ENCODE measurements at regions of chr17 and their contacts with region 1.

Region 1: GRCh38 chr17:62065598-62066468 is 755 bp upstream of the MED13 start:
- DNase-seq: peak; percentile 99
- ATAC-seq: peak; percentile 99 to 100 (median 100)
- H3K4me3 ChIP-seq: peak overlapping the region; percentile 63 to 99 (median 94)
- H3K27ac ChIP-seq: peak overlapping the region; percentile 92 to 100 (median 99)
- H3K4me1 ChIP-seq: peaks cover 0 to 38% (median 29%) of the 10 kb centered on the region in 9 donors
- H3K27me3 ChIP-seq: no peaks in the 10 kb centered on the region
- CTCF ChIP-seq: peak; percentile 88 to 98 (median 93)

Region 2: DNA sequence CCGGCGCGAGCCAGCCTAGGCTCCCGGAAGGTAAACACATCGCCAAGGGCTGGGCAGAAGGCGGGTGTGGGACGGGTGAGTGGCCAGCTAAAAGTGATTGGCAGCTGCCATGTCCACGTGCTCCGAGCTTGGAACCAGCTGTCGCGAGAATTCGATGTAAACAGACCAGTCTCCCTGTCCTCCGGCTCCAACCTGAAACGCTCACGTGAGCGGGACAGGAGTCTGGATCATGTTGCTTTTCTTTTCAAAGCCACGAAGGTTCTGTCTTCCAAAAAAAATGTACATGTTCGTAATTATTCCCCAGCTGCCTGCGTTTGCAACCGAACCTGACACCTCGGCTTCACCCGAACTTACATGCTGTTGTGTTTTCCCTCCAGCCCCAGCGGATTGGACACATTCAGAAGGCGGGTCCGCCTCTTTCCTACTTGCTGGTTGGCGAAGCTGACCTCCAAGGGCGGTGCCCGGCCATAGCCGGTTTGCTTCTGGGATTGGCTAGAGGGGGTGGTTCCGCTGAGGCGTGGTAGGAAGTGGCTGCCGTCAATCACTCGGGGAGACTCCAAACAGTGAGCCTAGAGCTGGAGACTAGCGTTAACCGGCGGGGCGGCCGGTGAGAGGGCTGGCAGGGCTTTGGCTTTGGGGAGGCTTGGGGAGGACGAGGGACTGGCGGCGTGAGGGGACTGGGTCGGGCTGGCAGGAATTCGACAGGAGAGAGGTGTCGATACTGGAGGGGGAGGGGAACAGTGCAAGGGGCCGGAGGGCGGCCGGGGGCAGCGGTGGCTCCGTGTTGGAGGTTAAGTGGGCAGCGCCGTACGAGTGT is 1388.3 kb before region 1 on chr17 and contains the start of gene BCAS3:
- intact Hi-C with region 1: loop called in 1 of 10 experiments (anchors 10 kb)
- DNase-seq: peak; percentile 96 to 99
- ATAC-seq: peak; percentile 98 to 99 (median 99)
- H3K4me3 ChIP-seq: peak within 1 kb of the TSS; percentile 73 to 95 (median 88)
- H3K27ac ChIP-seq: peak within 1 kb of the TSS; percentile 45 to 89 (median 76)
- H3K4me1 ChIP-seq: peaks cover 0 to 18% (median 13%) of the 10 kb centered on the region in 9 donors
- H3K27me3 ChIP-seq: no peaks in the 10 kb centered on the region
- CTCF ChIP-seq: no peak
- total RNA-seq, gene BCAS3: 14.1 to 21.8 (median 17.8) TPM

Region 3: DNA sequence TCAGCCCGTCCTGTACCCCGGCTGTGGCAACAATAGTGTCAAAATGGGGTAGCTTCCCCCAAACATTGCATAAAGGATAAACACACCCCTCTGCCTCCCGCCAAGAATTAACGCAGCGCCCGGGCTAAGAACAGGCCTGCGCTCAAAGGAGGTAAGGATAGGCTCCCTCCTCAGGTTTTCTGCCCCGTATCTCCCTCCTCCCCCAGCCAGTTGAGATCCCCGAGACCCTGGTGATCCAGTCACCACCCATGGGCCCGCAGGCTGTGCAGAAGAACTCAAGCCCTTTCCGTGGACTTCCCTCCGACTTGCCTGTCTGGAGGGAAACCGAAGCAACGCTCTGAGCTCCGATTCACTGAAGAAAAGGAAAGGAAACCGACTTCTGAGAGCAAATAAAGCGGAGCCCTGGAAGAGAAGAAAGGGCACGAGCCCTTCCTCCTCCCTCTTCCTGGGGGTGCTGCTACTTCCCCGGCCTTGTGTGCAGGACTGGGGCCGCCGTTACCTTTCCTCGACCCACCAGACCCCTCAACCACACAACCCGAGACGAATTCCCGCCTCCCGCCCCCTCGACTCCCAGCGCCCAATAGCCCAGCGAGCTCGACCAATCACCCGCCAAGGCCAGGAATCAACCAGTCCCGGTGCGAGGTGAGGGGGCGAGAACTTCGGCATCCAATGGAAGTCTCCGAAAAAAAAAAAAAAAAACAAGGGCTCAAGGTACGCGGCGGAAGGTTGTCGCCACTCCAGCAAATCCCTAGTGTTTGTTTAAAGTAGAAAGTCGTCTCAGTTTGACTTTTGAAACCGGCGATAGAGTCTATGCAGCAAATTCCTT is 202.6 kb before region 1 on chr17 and contains the start of gene BRIP1:
- intact Hi-C with region 1: loop called in 1 of 10 experiments (anchors 5 kb)
- DNase-seq: peak; percentile 87 to 90
- ATAC-seq: peak; percentile 99 to 100 (median 100)
- H3K4me3 ChIP-seq: peak within 1 kb of the TSS; percentile 26 to 80 (median 66)
- H3K27ac ChIP-seq: peak within 1 kb of the TSS in 9 of 10 donors; percentile 47 to 85 (median 67)
- H3K4me1 ChIP-seq: peaks cover 0 to 22% (median 9%) of the 10 kb centered on the region in 9 donors
- H3K27me3 ChIP-seq: no peaks in the 10 kb centered on the region
- CTCF ChIP-seq: no peak
- total RNA-seq, gene BRIP1: 0.09 to 2.1 (median 0.26) TPM in 9 of 10 donors, not detected in the other

Region 4: DNA sequence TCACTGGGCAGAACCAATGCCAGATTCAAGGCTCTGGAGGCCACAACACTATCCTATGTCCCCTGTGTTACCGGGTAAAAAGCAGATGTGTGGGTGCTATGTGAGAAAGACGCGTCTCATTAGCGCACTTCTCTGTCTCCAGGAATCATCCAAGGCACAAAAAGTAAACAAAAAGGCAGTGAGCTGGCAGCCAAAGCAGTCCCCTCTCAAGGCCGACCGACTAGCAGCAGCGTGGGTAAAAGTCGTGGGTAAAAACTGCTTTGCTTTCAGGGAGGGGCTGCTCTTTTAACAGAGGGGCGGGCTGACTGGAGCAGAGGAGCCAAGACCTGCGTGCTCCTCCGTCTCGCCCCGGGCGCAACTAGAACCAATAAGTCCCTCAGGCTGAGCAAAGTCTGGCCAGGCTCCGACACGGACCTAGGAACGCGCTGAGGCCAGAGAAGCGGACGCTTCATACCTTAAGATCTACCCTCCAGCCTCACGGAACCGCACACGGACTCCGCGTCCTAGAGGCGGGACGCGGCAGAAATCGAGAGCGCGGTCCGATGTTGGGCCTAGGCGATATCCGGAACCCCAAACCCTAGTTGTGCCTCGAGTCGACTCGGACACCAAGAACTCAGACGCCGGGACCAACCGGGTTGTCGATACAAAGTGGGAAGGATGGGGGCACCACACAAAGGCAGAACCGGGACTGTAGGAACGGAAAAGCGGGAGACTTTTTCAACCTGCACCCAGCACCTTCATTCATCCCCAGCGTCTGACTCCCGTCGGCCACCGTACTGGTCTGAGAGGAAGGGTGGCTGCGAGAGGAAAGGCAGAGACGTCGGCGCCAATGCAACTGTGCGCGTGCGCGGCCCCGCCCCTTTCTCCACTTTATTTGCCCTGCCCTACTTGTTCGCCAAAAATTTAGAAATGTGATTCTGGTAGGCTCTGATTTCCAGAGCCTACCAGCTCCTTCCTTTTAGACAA is 138.3 kb before region 1 on chr17 and contains the start of gene INTS2:
- intact Hi-C with region 1: loop called in 9 of 10 experiments (anchors 1 to 10 kb)
- DNase-seq: peak; percentile 96
- ATAC-seq: peak; percentile 97 to 100 (median 98)
- H3K4me3 ChIP-seq: peak within 1 kb of the TSS; percentile 27 to 98 (median 76)
- H3K27ac ChIP-seq: peak within 1 kb of the TSS; percentile 41 to 91 (median 85)
- H3K4me1 ChIP-seq: peaks cover 2 to 18% (median 14%) of the 10 kb centered on the region in 9 donors
- H3K27me3 ChIP-seq: no peaks in the 10 kb centered on the region
- CTCF ChIP-seq: no peak
- total RNA-seq, gene INTS2: 7.5 to 18.3 (median 13.1) TPM

Region 5: DNA sequence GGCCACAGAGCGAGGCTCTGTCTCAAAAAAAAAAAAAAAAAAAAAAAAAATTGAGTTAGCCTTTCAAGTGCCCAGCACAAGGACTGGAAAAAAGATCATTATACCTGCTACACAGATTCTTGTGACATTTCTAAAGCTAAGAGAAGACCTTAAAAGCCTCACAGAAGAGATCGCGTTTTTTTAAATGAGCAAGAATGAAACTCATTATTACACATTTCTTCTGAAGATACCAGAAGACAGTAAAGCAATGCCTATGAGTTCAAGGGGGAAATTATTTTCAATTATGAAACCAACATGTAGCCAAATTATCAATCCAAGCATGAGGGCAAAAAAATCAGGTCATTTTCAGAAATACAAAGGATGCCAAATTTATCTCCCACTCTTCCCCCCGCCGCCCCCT is 57.5 kb before region 1 on chr17:
- intact Hi-C with region 1: loop called in 1 of 10 experiments (anchors 10 kb)
- DNase-seq: no peak
- ATAC-seq: no peak
- H3K4me3 ChIP-seq: no peak overlapping the region
- H3K27ac ChIP-seq: no peak overlapping the region
- H3K4me1 ChIP-seq: peaks cover 0 to 9% (median 0%) of the 10 kb centered on the region in 9 donors
- H3K27me3 ChIP-seq: no peaks in the 10 kb centered on the region
- CTCF ChIP-seq: no peak

Region 6: DNA sequence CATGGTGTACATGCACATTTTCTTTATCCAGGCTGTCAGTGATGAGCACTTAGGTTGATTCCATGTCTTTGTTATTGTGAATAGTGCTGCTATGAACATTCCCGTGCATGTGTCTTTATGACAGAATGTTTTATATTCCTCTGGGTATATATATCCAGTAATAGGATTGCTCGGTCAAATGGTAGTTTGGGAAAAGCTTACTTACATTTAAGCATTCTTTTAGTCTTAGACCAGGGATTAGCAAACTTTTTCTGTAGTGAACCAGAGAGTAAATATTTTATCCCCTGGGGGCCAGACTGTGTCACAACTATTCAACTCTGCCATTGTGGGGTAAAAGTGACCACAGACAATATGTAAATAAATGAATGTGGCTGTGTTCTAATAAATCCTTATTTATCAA is 40.9 kb before region 1 on chr17:
- intact Hi-C with region 1: no loop called
- DNase-seq: no peak
- ATAC-seq: no peak
- H3K4me3 ChIP-seq: no peak overlapping the region
- H3K27ac ChIP-seq: no peak overlapping the region
- H3K4me1 ChIP-seq: peaks cover 0 to 19% (median 13%) of the 10 kb centered on the region in 9 donors
- H3K27me3 ChIP-seq: no peaks in the 10 kb centered on the region
- CTCF ChIP-seq: no peak

Region 7: DNA sequence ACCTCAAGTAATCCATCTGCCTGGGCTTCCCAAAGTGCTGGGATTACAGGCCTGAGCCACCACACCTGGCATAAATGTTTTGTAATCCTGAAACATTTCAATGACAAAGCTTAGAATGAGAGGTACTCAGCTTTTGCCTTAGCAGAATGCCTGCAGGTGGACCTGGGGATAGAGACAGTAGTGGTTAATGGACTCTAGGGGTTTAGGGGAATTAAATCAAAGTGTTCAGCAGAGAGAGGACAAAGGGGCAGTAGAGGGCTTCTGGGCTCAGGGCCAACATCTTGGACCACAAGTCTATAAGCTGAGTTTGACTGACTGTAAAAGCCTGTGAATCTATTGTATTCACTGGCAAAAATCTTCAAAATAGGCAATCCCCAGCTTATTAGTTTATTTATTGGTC is 35.3 kb after region 1 on chr17:
- intact Hi-C with region 1: no loop called
- DNase-seq: no peak
- ATAC-seq: no peak
- H3K4me3 ChIP-seq: no peak overlapping the region
- H3K27ac ChIP-seq: no peak overlapping the region
- H3K4me1 ChIP-seq: no peaks in the 10 kb centered on the region
- H3K27me3 ChIP-seq: peaks cover 0 to 11% (median 0%) of the 10 kb centered on the region in 7 donors
- CTCF ChIP-seq: no peak

Region 8: GRCh38 chr17:62140836-62141235 is 75.0 kb after region 1 on chr17:
- intact Hi-C with region 1: no loop called
- DNase-seq: no peak
- ATAC-seq: no peak
- H3K4me3 ChIP-seq: no peak overlapping the region
- H3K27ac ChIP-seq: no peak overlapping the region
- H3K4me1 ChIP-seq: no peaks in the 10 kb centered on the region
- H3K27me3 ChIP-seq: peaks cover 10 to 44% (median 32%) of the 10 kb centered on the region in 7 donors
- CTCF ChIP-seq: no peak

Measured in heart right ventricle (tissue), 16 donors.